ENCODE measurements at regions of chr12 and their contacts with region 1.

Region 1: DNA sequence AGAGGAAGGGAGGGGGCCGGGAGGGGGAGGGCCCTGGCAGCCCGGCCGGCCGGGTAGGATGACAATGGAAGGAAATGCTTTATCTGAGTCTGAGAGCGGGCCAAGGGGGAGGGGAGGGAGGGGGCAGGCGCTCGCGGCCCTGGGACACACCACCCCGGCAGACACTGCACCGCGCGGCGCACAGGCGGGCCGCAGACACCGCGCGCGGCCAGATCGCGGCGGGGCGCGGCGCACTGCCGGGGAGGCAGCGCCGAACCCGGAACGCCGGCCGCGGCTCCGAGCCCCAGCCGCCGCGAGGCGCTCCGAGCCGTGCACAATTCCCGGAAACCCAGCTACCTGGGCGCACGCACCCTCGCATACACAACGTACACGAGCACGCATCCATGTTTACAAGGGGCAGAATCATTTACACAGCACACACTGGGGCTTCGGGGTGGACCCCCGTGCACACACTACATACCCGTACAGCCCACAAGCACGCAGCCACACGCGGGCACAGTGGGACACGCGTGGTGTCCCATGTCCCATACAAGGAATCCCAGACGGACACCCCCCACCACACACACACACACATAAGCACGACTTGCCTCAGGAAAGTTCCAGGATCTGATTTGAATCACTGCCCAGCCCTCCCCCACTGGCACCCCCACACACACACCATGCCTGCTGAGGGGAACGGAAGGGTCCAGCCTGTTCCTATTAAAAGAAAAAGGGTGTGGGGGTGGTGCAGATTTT is at the start of gene HDAC7:
- DNase-seq: peak; percentile 89 to 95 (median 92)
- ATAC-seq: peak; percentile 82
- H3K4me3 ChIP-seq: peak within 1 kb of the TSS; percentile 68
- H3K27ac ChIP-seq: peak within 1 kb of the TSS; percentile 80
- H3K4me1 ChIP-seq: peaks cover 39 to 51% of the 10 kb centered on the region in 2 experiments
- H3K27me3 ChIP-seq: no peaks in the 10 kb centered on the region
- CTCF ChIP-seq: peak in 1 of 3 experiments; percentile 20; a peak in 1 of 6 replicates
- EP300 ChIP-seq: no peak
- POLR2A ChIP-seq: no peak
- RAD21 ChIP-seq: 0 out of 4 replicates have a peak, but pooled peaks of 1 of the 2 experiments have one; percentile 16
- polyA plus RNA-seq, gene HDAC7: 2.5 to 3.8 TPM

Region 2: GRCh38 chr12:47848853-47849252 is 28.8 kb after region 1 on chr12:
- CTCF ChIA-PET with region 1: no interaction called
- POLR2A ChIA-PET with region 1: no interaction called
- in situ Hi-C with region 1: no loop called
- intact Hi-C with region 1: loop called (anchors 1 kb)
- DNase-seq: no peak
- ATAC-seq: no peak
- H3K4me3 ChIP-seq: no peak overlapping the region
- H3K27ac ChIP-seq: no peak overlapping the region
- H3K4me1 ChIP-seq: peaks cover 16 to 22% of the 10 kb centered on the region in 2 experiments; a peak in 4 of 5 replicates
- H3K27me3 ChIP-seq: no peaks in the 10 kb centered on the region
- CTCF ChIP-seq: no peak
- EP300 ChIP-seq: no peak
- POLR2A ChIP-seq: no peak
- RAD21 ChIP-seq: no peak

Measured in K562 (cell line).